ENCODE measurements at regions of chr18 and their contacts with region 1.

Region 1: DNA sequence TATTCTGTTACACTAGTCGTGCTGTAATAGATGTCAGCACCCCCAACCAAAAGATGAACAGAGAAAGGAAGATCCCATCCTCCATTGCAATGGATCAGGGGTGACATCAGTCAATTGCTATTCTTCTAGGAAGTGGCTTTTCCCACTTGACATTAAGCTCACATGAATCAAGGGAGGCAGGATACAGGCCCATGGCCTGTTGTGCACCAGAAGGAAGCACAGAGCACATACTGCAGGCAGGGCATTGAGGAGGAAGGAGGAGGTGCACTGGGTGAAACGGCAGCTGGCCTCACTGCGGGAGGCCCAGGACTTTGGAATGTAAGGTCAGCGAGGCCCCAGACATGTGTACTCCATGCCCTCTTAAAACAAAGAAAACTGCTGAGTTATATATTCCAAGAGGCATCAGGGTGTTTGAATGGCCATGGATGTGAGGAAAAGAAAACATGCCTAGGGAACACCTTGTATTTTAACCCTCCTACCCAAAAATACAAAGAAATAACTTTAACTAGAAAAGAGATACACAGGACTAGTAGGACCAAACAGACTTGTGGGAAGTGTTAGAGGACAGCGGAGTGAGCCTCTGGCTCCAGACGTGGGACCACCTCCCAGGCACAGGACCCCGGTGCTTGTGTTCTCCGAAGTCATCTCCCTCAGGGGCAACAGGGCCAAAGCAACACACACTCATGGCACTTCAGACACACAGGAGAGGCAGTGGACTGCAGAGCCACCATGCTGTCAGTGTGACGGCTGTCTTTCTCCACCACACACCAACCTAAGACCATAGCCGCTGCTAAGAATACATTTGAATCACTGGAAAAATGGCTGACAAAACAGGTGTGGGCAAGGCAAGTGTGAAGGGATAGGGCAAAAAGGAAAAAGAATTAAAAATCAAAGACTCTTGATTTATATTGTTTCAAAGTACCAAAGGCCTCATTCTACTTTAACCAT is 51.4 kb upstream of the RIOK3 start:
- DNase-seq: no peak
- H3K4me3 ChIP-seq: no peak overlapping the region
- H3K27ac ChIP-seq: peak overlapping the region; percentile 48; the same call in 1 of the 2 replicates
- H3K4me1 ChIP-seq: peaks cover 7 to 10% (median 9%) of the 10 kb centered on the region in 4 experiments
- H3K27me3 ChIP-seq: no peaks in the 10 kb centered on the region
- CTCF ChIP-seq: no peak
- EP300 ChIP-seq: no peak
- POLR2A ChIP-seq: no peak
- RAD21 ChIP-seq: no peak

Region 2: GRCh38 chr18:23412351-23412964 is 10.8 kb after region 1 on chr18:
- CTCF ChIA-PET with region 1: interaction called, 16 read pairs
- POLR2A ChIA-PET with region 1: interaction called, 3 read pairs
- DNase-seq: no peak
- H3K4me3 ChIP-seq: no peak overlapping the region
- H3K27ac ChIP-seq: no peak overlapping the region
- H3K4me1 ChIP-seq: no peaks in the 10 kb centered on the region
- H3K27me3 ChIP-seq: no peaks in the 10 kb centered on the region
- CTCF ChIP-seq: no peak
- EP300 ChIP-seq: no peak
- POLR2A ChIP-seq: no peak
- RAD21 ChIP-seq: no peak

Region 3: GRCh38 chr18:23428821-23429220 is 27.1 kb after region 1 on chr18:
- CTCF ChIA-PET with region 1: no interaction called
- POLR2A ChIA-PET with region 1: no interaction called
- DNase-seq: no peak
- H3K4me3 ChIP-seq: no peak overlapping the region
- H3K27ac ChIP-seq: no peak overlapping the region
- H3K4me1 ChIP-seq: no peaks in the 10 kb centered on the region
- H3K27me3 ChIP-seq: no peaks in the 10 kb centered on the region
- CTCF ChIP-seq: no peak
- EP300 ChIP-seq: no peak
- POLR2A ChIP-seq: no peak
- RAD21 ChIP-seq: no peak

Region 4: GRCh38 chr18:23573626-23574431 is 172.2 kb after region 1 on chr18:
- CTCF ChIA-PET with region 1: no interaction called
- POLR2A ChIA-PET with region 1: no interaction called
- DNase-seq: peak in 1 of 2 experiments; percentile 27
- H3K4me3 ChIP-seq: no peak overlapping the region
- H3K27ac ChIP-seq: no peak overlapping the region
- H3K4me1 ChIP-seq: peaks cover 0 to 4% (median 1%) of the 10 kb centered on the region in 4 experiments; a peak in 2 of 7 replicates
- H3K27me3 ChIP-seq: no peaks in the 10 kb centered on the region
- CTCF ChIP-seq: no peak
- EP300 ChIP-seq: no peak
- POLR2A ChIP-seq: no peak
- RAD21 ChIP-seq: no peak